Mammary epithelial cell (primary cell): ENCODE measurements at regions of chr11 and their contacts with region 1.

Region 1: DNA sequence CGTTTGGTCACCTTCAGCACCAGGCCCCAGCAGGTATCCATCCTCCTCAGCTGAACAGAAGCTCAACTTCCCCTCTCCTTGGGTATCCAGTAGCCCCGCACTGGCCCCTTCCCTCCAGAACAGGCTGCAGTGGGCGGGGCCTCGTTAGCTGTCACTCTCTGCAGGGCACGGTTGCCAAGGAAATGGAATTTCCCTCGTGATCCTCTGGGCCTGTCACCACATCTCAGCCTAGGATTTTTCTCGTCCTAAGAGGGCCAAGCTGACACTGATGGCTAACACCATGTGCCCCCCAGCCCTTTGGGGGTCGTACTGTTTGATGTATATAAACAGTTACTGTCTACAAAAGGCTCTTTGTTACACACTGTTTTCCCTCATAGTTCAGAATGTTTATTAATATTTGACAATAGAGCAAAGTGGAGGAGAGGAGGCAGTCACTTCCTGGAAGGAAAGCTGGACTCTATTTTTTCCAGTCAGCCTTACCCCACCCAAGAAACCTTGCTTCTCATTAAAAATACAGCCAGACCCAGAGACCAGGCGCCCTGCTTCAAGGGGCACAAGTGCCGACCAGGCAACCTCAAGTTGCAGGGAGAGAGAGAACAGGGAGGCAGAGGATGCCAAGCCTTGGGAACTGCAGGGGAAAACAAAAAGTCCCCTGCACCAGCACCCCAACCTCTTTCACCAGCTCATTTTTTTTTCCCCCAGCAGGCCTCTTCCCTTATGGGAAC is 44.5 kb downstream of the FEZ1 start:
- DNase-seq: peak; percentile 43
- H3K4me3 ChIP-seq: no peak overlapping the region
- H3K27ac ChIP-seq: peak overlapping the region; percentile 19
- H3K4me1 ChIP-seq: peaks cover 29% of the 10 kb centered on the region
- H3K27me3 ChIP-seq: no peaks in the 10 kb centered on the region
- CTCF ChIP-seq: no peak

Region 2: GRCh38 chr11:125481531-125481930 is 30.0 kb after region 1 on chr11:
- CTCF ChIA-PET with region 1: interaction called, 13 read pairs
- dilution Hi-C with region 1: no loop called
- in situ Hi-C with region 1: no loop called
- intact Hi-C with region 1: no loop called
- DNase-seq: peak; percentile 43
- H3K4me3 ChIP-seq: no peak overlapping the region
- H3K27ac ChIP-seq: peak overlapping the region; percentile 32
- H3K4me1 ChIP-seq: peaks cover 19% of the 10 kb centered on the region
- H3K27me3 ChIP-seq: no peaks in the 10 kb centered on the region
- CTCF ChIP-seq: no peak

Region 3: GRCh38 chr11:126048198-126048597 is 596.6 kb after region 1 on chr11:
- CTCF ChIA-PET with region 1: no interaction called
- dilution Hi-C with region 1: no loop called
- in situ Hi-C with region 1: no loop called
- intact Hi-C with region 1: no loop called
- DNase-seq: no peak
- H3K4me3 ChIP-seq: no peak overlapping the region
- H3K27ac ChIP-seq: no peak overlapping the region
- H3K4me1 ChIP-seq: no peaks in the 10 kb centered on the region
- H3K27me3 ChIP-seq: no peaks in the 10 kb centered on the region
- CTCF ChIP-seq: no peak